ENCODE measurements at regions of chr19 and their contacts with region 1.

Region 1: GRCh38 chr19:47436712-47437401 is 17.5 kb upstream of the MEIS3 start:
- DNase-seq: peak; percentile 87
- ATAC-seq: peak; percentile 87

Region 2: GRCh38 chr19:47305309-47305751 is 131.5 kb before region 1 on chr19:
- intact Hi-C with region 1: no loop called
- DNase-seq: peak; percentile 89
- ATAC-seq: peak; percentile 60

Region 3: DNA sequence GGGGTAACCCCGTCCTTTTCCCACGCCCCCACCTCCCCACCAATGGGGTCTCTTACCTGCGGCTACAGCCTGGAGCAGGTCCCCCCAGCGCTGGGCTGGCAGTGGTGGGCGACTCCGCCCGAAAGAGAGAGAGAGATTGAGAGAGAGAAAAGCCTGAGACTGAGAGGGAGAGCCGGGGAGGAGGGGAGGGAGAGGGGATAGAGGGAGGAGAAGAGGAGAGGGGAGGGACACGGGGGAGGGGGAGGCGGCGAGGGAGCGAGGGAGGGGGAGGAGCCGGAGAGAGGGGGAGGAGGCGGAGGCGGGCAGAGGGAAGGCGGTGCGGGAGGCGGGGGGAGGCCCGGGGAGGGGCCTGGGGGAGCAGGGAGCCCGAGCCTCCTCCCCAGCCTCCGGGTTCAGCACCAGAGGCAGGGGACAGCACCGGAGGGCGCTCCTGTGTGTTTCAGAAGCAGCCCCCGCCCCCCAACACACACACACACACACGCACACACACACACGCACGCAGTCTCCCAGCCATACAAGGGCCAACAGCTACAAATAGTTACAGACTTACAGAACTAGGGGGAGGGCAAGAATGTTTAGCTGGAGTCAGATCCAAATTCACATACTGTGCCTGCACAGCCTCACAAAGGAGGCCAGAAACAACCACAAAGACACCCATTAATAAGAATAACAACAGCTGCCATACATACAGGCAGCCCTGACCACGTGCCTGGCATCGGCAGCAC is 35.0 kb after region 1 on chr19 and contains the start of gene SLC8A2:
- intact Hi-C with region 1: no loop called
- DNase-seq: no peak
- ATAC-seq: peak; percentile 52
- total RNA-seq, gene SLC8A2: 0.46 TPM

Region 4: DNA sequence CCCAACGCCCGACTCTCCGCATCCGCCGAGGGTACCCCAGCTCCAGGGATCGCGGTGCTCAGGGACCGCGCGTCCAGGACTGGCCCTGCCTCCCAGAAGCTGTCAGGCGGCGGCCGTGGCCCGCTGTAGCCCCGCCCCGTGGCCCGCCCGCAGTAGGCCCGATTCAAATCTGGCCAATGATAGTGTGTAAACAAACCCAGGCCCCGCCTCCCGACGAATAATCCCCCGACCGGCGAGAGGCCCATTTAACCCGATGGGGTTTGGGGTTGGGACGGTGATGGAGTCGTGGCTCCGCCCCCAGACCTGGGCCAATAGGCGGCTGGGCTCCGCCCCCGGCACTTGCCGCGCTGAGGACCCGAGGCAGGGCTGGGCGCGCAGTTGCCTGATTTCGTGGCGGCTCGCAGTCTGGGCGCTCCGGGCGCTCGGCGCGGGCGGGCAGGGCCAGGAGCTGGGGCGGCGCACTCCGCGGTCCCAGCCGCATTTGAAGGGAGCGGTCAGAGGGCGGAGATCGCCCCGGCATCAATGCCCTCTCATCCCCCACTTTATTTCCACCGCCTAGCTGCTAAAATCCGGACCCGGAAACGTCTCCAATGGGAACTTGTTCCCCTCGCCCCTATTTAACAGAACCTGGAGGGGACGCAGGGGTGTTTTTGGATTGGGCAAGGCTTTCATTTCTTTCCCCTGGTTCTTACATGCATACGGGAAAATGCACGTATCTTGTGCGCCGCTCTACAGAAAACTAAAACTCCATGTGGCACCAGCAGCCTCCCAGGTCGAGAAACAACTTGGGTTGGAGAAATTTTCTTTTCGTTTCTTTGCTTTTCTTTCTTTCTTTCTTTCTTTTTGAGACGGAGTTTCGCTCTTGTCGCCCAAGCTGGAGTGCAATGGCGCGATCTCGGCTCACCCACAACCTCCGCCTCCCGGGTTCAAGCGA is 163.7 kb after region 1 on chr19:
- intact Hi-C with region 1: loop called (anchors 10 kb)
- DNase-seq: peak; percentile 100
- ATAC-seq: peak; percentile 99

Region 5: DNA sequence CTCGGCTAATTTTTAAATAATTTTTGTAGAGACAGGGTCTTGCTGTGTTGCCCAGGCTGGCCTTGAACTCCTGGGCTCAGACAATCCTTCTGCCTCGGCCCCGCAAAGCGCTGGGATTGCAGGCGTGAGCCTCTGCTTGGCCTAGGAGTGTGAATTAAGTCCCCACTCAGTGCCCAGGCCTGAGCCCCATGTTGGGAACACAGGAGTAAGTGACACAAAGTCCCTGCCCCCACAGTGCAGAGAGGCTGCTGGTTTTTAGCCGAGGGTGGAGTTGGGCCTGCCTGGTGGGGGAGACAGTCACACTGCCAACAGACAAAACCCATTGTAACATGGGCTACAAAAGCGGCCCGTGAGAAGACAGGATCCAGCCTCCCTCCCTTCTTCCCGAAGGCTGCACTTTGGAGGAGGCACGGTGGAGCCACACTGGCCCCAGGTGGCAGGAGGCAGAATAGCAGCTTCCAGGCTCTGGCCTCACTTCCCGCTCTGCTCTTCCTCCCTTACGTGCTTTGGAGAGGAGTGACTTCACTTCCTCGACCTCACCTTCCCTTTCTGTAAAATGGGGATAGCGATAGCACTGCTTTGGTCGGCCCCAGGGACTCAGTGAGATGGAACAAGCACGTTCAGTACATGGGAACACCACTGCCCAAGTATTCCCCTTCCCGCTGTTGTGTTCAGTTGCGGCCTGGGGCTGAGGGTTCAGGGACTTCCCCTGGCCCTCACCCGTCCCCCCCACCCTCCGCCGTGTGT is 261.2 kb after region 1 on chr19:
- intact Hi-C with region 1: loop called (anchors 1 kb)
- DNase-seq: peak; percentile 85
- ATAC-seq: peak; percentile 89

Region 6: GRCh38 chr19:47707135-47707925 is 270.5 kb after region 1 on chr19:
- intact Hi-C with region 1: loop called (anchors 1 kb)
- DNase-seq: no peak
- ATAC-seq: peak; percentile 76